Activated CD4-positive, alpha-beta T cell treated with anti-CD3 and anti-CD28 coated beads for 36 hours (primary cell): ENCODE measurements at regions of chr2 and their contacts with region 1.

Region 1: DNA sequence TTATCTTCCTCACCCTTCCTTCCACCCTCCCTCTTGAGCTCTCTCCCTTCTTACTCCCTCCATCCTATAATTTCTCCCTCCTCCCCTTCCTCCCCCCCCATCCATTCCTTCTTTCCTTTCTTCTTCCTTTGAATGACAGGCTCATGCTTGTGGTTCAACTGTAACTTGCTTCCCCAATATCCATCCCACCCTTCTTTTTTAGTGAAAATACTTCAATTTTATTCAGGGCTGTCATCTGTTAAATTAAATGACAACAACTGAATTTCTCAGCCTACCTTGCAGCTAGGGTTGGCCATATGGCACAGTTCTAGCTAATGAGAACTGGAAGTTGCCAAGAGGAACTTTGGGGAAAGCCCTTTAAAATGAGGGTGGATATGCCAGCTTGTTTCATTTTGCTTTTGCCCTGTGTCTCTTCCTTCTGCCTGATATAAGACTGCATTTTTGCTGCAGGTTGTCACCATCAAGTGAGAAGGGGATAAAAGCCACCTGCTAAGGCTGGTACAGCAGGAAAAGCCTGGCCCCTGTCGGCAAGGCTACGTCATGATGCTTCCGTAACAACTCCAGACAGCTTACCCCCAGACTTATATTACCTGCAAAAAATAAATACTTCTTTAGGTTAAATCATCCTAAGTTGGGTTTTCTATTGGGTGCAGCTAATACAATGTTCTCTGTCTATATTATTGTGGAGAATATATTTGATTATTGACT is 121.8 kb downstream of the NXPH2 start:
- DNase-seq: no peak
- ATAC-seq: no peak
- H3K4me3 Mint-ChIP-seq: no peak overlapping the region
- H3K27ac Mint-ChIP-seq: no peak overlapping the region
- H3K4me1 Mint-ChIP-seq: no peaks in the 10 kb centered on the region
- H3K27me3 Mint-ChIP-seq: peaks cover 4% of the 10 kb centered on the region

Region 2: DNA sequence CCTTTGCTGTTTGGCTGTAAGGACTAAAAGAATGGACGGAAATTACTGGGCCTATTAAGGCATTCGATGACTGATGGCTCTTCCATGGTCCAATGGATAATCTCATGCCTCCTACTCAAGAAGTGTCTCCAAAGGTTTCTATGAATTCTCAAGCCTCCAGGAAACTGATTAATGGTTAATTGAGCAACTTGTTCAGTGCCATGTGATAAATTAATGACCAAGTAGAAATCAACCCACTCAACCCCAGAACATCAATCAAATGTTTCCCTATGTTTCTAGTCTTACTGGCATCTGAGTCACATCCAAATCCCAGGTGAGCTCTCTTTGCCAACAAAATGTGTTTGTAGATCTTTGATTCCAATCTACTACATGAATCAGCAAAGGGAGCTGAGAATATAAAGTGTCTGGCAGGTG is 18.3 kb after region 1 on chr2:
- CTCF ChIA-PET with region 1: interaction called, 3 read pairs
- POLR2A ChIA-PET with region 1: interaction called, 14 read pairs
- intact Hi-C with region 1: no loop called
- DNase-seq: no peak
- ATAC-seq: no peak
- H3K4me3 Mint-ChIP-seq: no peak overlapping the region
- H3K27ac Mint-ChIP-seq: no peak overlapping the region
- H3K4me1 Mint-ChIP-seq: no peaks in the 10 kb centered on the region
- H3K27me3 Mint-ChIP-seq: peaks cover 9% of the 10 kb centered on the region